OCI-LY7 (cell line): ENCODE measurements at regions of chr6 and their contacts with region 1.

Region 1: DNA sequence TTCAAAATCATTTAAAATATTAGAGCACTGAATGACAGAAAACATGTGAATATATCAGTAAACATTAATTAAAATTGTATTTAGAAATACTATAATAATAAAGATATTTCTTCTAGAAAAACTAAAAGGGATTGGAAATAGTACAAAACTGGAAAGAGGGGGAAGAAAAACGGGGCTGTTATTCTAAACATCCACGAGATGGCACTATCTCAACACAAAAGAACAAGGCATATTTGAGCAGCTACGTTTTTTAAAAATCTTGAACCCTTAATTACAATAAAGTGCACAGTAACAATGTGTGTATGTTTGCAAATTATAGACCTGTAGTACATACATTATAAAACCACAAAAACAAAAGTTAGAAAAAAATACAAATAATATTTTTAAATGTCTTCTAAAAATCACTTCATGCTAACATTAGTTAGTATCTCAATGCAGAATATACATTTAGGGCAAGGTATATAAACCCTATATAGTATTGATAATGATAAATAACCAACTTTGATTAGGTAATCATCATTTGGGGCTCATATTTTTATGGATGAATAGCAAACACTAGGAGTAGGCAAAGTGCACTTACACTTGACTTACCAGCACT is 42.5 kb upstream of the PNISR start:
- DNase-seq: peak; percentile 54
- H3K4me3 ChIP-seq: no peak overlapping the region
- H3K27ac ChIP-seq: no peak overlapping the region
- H3K4me1 ChIP-seq: no peaks in the 10 kb centered on the region
- CTCF ChIP-seq: peak; percentile 89

Region 2: DNA sequence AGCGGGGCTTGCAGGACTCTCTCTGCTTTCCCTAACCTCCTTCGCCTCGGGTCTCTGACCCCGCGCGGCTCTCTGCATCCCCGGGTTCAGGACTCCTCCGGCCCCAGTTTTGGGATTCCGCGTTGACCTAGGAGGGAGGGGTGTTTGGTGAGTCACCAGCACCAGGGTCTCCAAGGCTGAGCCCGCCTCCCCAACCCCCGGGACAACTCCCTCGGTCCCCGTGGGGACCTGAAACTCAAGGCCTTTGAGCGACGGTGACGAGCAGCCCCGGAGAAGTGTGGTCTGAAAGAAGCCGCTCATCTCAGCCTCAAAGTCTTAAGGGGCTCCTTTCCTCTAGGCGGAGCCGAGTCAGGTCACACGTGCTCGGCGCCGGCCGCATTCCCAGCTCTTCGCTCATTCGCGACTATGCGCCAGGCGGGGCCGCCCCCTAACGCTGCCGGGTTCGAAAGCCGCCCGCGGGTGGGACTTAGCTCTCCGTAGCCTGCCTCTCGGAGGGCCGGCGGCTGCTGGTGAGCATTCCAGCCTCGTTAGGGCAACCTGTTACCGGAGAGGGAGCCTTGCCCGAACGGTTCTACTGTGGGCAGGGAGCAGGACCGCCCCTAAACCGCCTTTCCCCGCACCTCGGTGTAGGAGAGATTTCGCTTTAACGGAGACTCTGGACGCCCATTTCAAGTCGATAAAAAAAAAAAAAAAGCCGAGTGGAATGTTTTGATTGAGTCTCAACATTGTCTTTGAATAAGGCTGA is 136.0 kb after region 1 on chr6:
- CTCF ChIA-PET with region 1: no interaction called
- POLR2A ChIA-PET with region 1: no interaction called
- intact Hi-C with region 1: no loop called
- DNase-seq: no peak
- H3K4me3 ChIP-seq: no peak overlapping the region
- H3K27ac ChIP-seq: no peak overlapping the region
- H3K4me1 ChIP-seq: no peaks in the 10 kb centered on the region
- CTCF ChIP-seq: no peak

Region 3: DNA sequence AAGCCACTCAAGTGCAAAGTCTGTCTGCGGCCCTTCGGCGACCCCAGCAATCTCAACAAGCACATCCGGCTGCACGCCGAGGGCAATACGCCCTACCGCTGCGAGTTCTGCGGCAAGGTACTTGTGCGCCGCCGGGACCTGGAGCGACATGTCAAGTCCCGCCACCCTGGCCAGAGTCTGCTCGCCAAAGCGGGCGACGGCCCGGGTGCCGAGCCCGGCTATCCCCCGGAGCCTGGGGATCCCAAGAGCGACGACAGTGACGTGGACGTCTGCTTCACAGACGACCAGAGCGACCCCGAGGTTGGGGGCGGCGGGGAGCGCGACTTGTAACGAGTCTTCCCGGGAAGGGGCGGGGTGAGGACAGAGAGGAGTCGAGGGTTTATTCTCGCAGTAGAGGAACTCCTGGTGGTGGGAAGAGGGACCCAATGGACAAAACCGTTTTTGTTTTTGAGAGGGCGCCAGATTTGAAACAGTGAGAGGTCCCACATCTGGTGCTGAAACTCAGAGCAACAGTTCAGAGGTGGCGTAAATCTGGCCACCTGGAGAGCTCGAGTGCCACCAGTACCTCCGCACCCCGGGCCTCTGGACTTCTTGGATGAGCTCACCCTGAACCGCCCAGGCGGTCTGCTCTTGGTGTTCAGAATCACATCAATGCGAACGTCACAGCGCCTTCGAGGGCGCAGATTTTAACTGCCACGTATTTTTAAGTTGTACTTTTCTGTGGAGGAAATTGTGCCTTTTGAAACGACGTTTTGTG is 147.0 kb after region 1 on chr6:
- CTCF ChIA-PET with region 1: no interaction called
- POLR2A ChIA-PET with region 1: no interaction called
- intact Hi-C with region 1: loop called (anchors 5 kb)
- DNase-seq: no peak
- H3K4me3 ChIP-seq: peak overlapping the region; percentile 60
- H3K27ac ChIP-seq: no peak overlapping the region
- H3K4me1 ChIP-seq: no peaks in the 10 kb centered on the region
- CTCF ChIP-seq: no peak

Region 4: DNA sequence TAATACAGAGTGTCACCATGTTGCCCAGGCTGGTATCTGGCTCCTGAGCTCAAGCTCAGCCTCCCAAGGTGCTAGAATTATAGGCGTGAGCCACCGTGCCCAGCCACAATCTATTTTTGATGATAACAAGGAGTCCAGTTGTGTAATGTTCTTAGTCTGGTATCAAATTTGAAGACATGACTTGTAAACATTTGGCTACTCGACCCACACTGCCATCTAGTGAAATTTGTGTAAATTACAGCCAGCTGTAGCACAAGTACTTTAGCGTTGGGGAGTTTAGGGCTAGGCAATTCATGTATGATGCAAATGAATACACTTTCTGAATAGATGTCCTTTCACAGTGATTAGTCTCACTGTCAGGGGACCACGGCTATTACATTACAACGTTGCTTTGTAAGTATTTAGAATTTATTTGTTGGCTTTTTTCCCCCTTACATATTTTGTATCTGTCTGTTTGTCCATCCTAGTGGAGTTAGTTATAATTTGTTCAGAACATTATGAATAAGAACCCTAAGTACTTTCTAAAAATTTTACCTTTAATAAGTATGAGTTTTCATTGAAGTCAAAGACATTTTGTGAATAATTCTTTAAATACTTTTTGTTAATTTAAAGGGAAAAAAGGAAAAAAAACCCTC is 278.8 kb after region 1 on chr6:
- CTCF ChIA-PET with region 1: no interaction called
- POLR2A ChIA-PET with region 1: interaction called, 3 read pairs
- intact Hi-C with region 1: loop called (anchors 1 kb)
- DNase-seq: peak; percentile 69
- H3K4me3 ChIP-seq: no peak overlapping the region
- H3K27ac ChIP-seq: no peak overlapping the region
- H3K4me1 ChIP-seq: no peaks in the 10 kb centered on the region
- CTCF ChIP-seq: peak; percentile 91